GM23248 (cell line): ENCODE measurements at regions of chr4 and their contacts with region 1.

Region 1: GRCh38 chr4:110586131-110586850 is 36.6 kb downstream of the PITX2 start:
- DNase-seq: peak; percentile 87
- H3K4me3 ChIP-seq: peak overlapping the region; percentile 61
- H3K27ac ChIP-seq: no peak overlapping the region
- H3K4me1 ChIP-seq: no peaks in the 10 kb centered on the region; the same call in 1 of the 2 replicates
- H3K27me3 ChIP-seq: no peaks in the 10 kb centered on the region

Region 2: GRCh38 chr4:110970642-110971041 is 384.4 kb after region 1 on chr4:
- in situ Hi-C with region 1: loop called (anchors 25 kb)
- DNase-seq: peak; percentile 51
- H3K4me3 ChIP-seq: no peak overlapping the region
- H3K27ac ChIP-seq: no peak overlapping the region
- H3K4me1 ChIP-seq: 0 out of 2 replicates have a peak, but pooled peaks cover 6% of the 10 kb centered on the region
- H3K27me3 ChIP-seq: no peaks in the 10 kb centered on the region

Region 3: GRCh38 chr4:111234939-111235338 is 648.6 kb after region 1 on chr4:
- in situ Hi-C with region 1: no loop called
- DNase-seq: no peak
- H3K4me3 ChIP-seq: no peak overlapping the region
- H3K27ac ChIP-seq: no peak overlapping the region
- H3K4me1 ChIP-seq: peaks cover 9% of the 10 kb centered on the region
- H3K27me3 ChIP-seq: no peaks in the 10 kb centered on the region

Region 4: DNA sequence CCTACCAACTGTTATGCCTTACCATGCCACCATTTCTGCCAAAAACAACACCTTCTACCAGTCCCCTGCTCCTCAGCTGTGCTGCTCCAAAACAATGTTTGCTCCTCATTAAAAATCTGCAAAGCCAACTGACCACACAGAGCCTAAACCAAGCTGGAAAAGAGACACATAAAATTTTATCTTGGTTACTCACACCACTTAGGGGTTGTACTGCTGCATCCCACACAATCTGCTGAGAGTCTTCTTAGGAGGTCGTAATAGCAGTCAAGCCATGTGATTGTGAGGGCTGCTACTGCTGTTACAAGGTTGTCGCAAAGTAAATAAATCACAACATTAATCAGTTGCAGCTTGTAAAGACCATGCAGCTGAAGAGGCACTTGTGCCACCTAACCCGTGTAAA is 951.6 kb after region 1 on chr4:
- in situ Hi-C with region 1: no loop called
- DNase-seq: peak; percentile 62
- H3K4me3 ChIP-seq: 0 out of 2 replicates have a peak overlapping the region, but pooled peaks have one; percentile 8
- H3K27ac ChIP-seq: 0 out of 2 replicates have a peak overlapping the region, but pooled peaks have one; percentile 9
- H3K4me1 ChIP-seq: peaks cover 36% of the 10 kb centered on the region
- H3K27me3 ChIP-seq: no peaks in the 10 kb centered on the region

Region 5: DNA sequence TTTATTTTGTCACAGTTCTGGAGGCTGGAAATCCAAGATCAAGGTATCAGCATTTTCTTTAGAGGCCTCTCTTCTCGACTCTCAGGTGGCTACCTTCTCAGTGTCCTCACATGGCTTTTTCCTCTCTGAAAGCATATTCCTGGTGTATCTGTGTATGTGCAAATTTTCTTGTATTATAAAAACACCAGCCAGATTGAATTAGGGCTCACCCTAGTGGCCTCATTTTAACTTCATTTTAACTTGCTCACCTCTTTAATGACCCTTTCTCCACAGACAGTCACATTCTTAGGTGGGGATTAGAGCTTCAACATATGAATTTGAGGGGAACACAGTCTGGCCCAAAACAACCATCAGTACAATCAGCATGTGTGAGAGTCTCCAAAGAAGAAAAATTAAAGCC is 1016.6 kb after region 1 on chr4:
- in situ Hi-C with region 1: loop called (anchors 25 kb)
- DNase-seq: peak; percentile 45
- H3K4me3 ChIP-seq: no peak overlapping the region
- H3K27ac ChIP-seq: no peak overlapping the region
- H3K4me1 ChIP-seq: peaks cover 20% of the 10 kb centered on the region
- H3K27me3 ChIP-seq: no peaks in the 10 kb centered on the region